Uterus (tissue), 4 donors: ENCODE measurements at regions of chr12 and their contacts with region 1.

Region 1: DNA sequence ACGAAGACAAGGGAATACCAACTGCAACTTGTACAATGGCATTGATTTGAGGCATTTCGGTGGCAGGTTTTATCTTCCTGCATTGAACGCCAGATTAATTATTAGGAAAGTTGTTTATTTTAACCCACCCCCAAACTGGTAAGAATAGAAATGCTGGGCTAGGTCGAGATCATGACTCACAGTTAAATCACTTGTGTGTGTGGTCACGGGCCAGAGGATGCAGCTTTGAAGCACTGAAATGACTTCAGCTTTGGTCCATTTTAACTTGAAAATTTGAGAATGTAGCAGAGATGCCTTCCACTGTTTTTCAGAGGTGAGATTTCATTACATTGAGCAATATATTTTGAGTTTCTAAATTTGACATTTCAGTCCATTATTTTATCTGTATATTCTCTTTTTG is 23.6 kb upstream of the KCNH3 start:
- DNase-seq: no peak
- H3K4me3 ChIP-seq: no peak overlapping the region
- H3K27ac ChIP-seq: no peak overlapping the region
- H3K4me1 ChIP-seq: no peaks in the 10 kb centered on the region
- H3K27me3 ChIP-seq: no peaks in the 10 kb centered on the region
- CTCF ChIP-seq: no peak
- POLR2A ChIP-seq: no peak

Region 2: GRCh38 chr12:49336645-49337584 is 178.4 kb before region 1 on chr12 and contains the start of gene C1QL4:
- intact Hi-C with region 1: loop called (anchors 10 kb)
- DNase-seq: peak; percentile 67 to 81
- H3K4me3 ChIP-seq: peak within 1 kb of the TSS; percentile 2 to 24
- H3K27ac ChIP-seq: no peak within 1 kb of the TSS
- H3K4me1 ChIP-seq: no peaks in the 10 kb centered on the region
- H3K27me3 ChIP-seq: peaks cover 15 to 16% of the 10 kb centered on the region in 2 donors
- CTCF ChIP-seq: peak; percentile 78 to 95 (median 86)
- POLR2A ChIP-seq: no peak
- total RNA-seq, gene C1QL4: 1.7 TPM in 1 of 4 donors, not detected in the others

Region 3: DNA sequence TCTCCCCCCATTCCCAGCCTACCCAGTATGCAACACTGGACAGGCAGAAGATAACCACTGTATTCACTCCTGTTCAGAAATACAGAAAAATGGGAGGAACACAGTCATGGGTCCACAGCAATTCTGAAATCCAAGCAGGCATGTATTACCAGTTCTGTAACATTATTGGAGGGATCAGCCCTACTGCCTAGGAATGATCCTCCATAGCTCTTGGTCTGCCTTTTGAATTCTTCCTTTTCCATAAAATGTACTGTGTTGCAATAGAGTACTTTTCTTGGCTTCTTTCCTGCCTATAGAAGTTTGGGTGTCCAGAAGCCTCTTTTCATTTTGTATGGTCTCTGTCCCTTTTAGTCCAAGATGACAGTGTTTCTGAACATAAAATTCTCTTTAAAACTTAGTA is 101.5 kb before region 1 on chr12:
- intact Hi-C with region 1: no loop called
- DNase-seq: no peak
- H3K4me3 ChIP-seq: no peak overlapping the region
- H3K27ac ChIP-seq: no peak overlapping the region
- H3K4me1 ChIP-seq: no peaks in the 10 kb centered on the region
- H3K27me3 ChIP-seq: no peaks in the 10 kb centered on the region
- CTCF ChIP-seq: no peak
- POLR2A ChIP-seq: no peak